RWPE1 (cell line): ENCODE measurements at regions of chr13 and their contacts with region 1.

Region 1: GRCh38 chr13:99205616-99206220 is 5.1 kb downstream of the UBAC2 start:
- DNase-seq: no peak
- H3K27ac ChIP-seq: no peak overlapping the region
- CTCF ChIP-seq: no peak

Region 2: DNA sequence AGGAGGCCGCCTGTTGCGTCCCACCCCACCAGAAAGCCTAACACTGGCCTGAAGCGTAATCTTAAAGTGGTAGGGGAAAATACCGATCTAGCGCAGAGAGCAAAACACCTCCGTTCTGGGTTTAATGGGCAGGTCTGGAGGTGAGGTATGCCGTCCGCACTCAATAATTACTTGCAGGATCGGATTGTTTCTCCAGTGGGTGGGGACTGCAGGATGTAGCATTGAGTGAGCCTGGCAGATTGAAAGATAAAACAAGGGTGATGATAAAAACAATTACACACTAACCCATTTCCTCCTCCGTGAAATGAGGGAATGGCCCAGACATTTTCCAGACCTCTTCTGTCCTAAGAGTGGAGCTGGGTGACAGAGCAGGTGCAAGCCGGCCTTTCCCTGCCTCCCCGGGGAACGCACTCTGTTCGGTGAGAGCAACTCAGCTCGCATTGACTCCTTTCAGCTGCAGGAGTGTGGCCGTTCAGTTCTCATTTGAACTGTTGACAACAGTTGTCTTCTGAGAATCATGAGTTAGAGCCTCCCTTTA is 117.7 kb before region 1 on chr13:
- CTCF ChIA-PET with region 1: no interaction called
- POLR2A ChIA-PET with region 1: interaction called, 10 read pairs
- DNase-seq: no peak
- H3K27ac ChIP-seq: peak overlapping the region; percentile 94
- CTCF ChIP-seq: no peak